ENCODE measurements at regions of chr6 and their contacts with region 1.

Region 1: DNA sequence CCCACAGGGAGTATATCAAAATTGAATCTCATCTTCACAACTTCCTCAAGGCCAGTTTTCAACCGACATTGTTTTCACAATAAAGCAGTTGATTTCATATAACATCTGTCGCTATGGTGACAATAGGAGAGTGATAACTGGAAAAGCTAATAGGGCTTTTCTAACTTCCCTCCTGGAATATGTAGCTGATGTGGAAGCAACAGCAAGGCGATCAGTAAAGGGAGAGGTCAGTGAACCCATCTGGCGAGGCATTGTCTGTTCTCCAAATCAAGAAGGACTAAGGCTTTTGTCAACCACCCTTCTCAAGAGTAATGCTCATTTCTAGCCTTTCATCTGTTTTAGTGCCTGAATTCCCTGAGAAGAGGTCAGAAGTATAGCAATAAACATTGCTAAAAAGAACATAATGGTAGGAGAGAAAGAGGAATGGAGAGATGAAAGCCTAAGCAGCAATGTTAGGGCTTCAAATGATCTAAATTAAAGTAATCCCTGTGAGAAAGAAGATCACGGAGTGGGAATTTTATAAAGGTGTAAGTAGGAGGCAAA is 201.3 kb downstream of the AKAP7 start:
- DNase-seq: no peak
- H3K4me3 Mint-ChIP-seq: no peak overlapping the region
- H3K27ac Mint-ChIP-seq: no peak overlapping the region
- H3K4me1 Mint-ChIP-seq: no peaks in the 10 kb centered on the region
- H3K27me3 Mint-ChIP-seq: no peaks in the 10 kb centered on the region

Region 2: DNA sequence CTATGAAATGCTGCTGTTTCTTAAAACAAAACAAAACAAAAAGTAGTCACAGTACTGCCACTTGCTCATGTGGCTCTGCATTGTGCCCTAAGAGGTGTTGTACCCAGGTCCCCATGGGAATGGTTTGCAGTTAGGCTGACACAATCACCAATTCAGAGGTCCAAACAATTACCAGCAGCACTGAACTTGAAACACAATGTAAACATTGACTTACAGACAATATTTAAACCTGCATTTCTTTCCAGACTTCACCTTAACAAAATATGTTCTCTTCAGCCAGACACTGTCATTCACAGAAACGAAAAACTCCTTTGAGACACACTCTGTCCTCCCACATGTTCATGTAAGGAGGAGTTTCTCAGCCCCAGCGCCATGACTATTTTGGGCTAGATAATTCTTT is 29.6 kb after region 1 on chr6:
- CTCF ChIA-PET with region 1: interaction called, 4 read pairs
- intact Hi-C with region 1: loop called (anchors 2 kb)
- DNase-seq: no peak
- H3K4me3 Mint-ChIP-seq: no peak overlapping the region
- H3K27ac Mint-ChIP-seq: no peak overlapping the region
- H3K4me1 Mint-ChIP-seq: peaks cover 18% of the 10 kb centered on the region
- H3K27me3 Mint-ChIP-seq: no peaks in the 10 kb centered on the region

Region 3: GRCh38 chr6:131427434-131428058 is 90.9 kb after region 1 on chr6:
- CTCF ChIA-PET with region 1: no interaction called
- intact Hi-C with region 1: no loop called
- DNase-seq: no peak
- H3K4me3 Mint-ChIP-seq: no peak overlapping the region
- H3K27ac Mint-ChIP-seq: no peak overlapping the region
- H3K4me1 Mint-ChIP-seq: peaks cover 24% of the 10 kb centered on the region
- H3K27me3 Mint-ChIP-seq: no peaks in the 10 kb centered on the region